ENCODE measurements at regions of chr17 and their contacts with region 1.

Region 1: DNA sequence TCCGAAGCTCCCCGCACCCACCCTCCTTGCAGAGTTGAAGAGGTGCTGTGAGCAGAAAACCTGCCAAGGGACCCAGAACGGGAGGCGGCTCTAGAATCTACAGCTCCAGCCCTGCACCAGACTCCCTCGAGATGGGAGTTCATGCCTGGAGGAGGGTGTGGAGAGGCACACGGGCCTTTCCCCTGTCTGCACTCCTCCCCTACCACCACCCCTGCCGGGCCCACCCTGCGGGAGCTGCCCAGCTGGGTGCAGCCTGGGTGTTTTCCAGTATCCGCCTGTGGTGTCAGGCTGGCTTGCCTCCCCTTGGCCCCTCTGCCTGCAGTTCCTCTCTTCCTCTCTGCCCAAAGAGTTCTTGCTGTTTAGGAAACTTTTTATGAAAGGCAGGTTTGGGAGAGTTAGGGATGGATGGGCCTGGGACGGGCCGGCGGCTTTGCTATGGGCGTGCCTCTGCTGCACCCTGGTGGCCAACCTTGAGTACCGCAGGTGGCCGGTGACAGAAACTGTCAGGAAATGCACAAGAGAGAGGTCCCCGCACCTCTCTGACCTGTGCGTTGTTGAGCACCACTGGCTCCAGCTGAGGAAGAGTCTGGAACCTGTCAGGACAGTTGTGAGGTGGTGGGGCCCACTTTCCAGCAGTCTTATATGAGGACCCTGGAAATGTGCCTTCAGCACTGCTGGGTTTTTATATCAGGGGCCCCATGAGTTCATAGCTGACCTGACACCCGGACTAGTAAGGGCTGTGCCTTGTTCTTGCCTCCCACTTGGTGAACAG is 354.1 kb downstream of the SEC14L1 start:
- DNase-seq: peak; percentile 66 to 85
- H3K4me3 ChIP-seq: no peak overlapping the region
- H3K4me1 ChIP-seq: no peaks in the 10 kb centered on the region
- H3K27me3 ChIP-seq: no peaks in the 10 kb centered on the region

Region 2: GRCh38 chr17:77325577-77326075 is 169.2 kb before region 1 on chr17:
- in situ Hi-C with region 1: loop called (anchors 5 kb)
- DNase-seq: peak in 1 of 2 experiments; percentile 6
- H3K4me3 ChIP-seq: no peak overlapping the region
- H3K4me1 ChIP-seq: peaks cover 30% of the 10 kb centered on the region
- H3K27me3 ChIP-seq: no peaks in the 10 kb centered on the region

Measured in HAP-1 (cell line).